Activated T-helper 2 cell treated with anti-CD3 and anti-CD28 coated beads, Interferon-gamma antibody, Interleukin-2, Interleukin-4, amounts not matched to agents 10 μg/mL and 5 μg/mL and 100 μg/mL, durations not matched to agents 14 hours and 24 hours and 36 hours (primary cell): ENCODE measurements at regions of chr16 and their contacts with region 1.

Region 1: DNA sequence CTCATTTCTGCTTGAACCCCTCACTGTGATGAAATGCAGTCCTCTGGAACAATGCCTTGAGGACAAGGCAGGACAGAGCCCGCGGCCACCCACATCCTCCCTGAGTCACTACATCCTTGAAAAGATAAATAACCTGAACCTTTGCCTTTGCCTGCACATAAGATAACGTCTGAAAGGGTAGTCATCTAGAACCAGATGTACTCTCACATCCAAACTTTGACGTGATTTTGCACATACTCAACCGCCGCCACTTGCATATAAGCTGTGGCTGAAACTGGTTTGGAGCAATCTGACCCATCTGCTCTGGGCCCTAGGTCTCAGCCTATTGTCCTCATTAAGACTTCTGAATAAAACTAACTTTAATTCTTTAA is 252.1 kb downstream of the PHKB start:
- DNase-seq: peak; percentile 37
- H3K4me3 Mint-ChIP-seq: no peak overlapping the region
- H3K27ac Mint-ChIP-seq: peak overlapping the region; percentile 24
- H3K4me1 Mint-ChIP-seq: peaks cover 30% of the 10 kb centered on the region
- H3K27me3 Mint-ChIP-seq: peaks cover 31% of the 10 kb centered on the region

Region 2: GRCh38 chr16:47110939-47111338 is 602.3 kb before region 1 on chr16:
- intact Hi-C with region 1: loop called (anchors 10 kb)
- DNase-seq: no peak
- H3K4me3 Mint-ChIP-seq: no peak overlapping the region
- H3K27ac Mint-ChIP-seq: no peak overlapping the region
- H3K4me1 Mint-ChIP-seq: peaks cover 11% of the 10 kb centered on the region
- H3K27me3 Mint-ChIP-seq: peaks cover 30% of the 10 kb centered on the region

Region 3: GRCh38 chr16:47229053-47230050 is 483.9 kb before region 1 on chr16:
- intact Hi-C with region 1: loop called (anchors 5 kb)
- DNase-seq: no peak
- H3K4me3 Mint-ChIP-seq: no peak overlapping the region
- H3K27ac Mint-ChIP-seq: peak overlapping the region; percentile 15
- H3K4me1 Mint-ChIP-seq: peaks cover 17% of the 10 kb centered on the region
- H3K27me3 Mint-ChIP-seq: no peaks in the 10 kb centered on the region

Region 4: GRCh38 chr16:47574091-47575054 is 138.8 kb before region 1 on chr16:
- intact Hi-C with region 1: loop called (anchors 10 kb)
- DNase-seq: no peak
- H3K4me3 Mint-ChIP-seq: no peak overlapping the region
- H3K27ac Mint-ChIP-seq: peak overlapping the region; percentile 60
- H3K4me1 Mint-ChIP-seq: peaks cover 19% of the 10 kb centered on the region
- H3K27me3 Mint-ChIP-seq: no peaks in the 10 kb centered on the region

Region 5: DNA sequence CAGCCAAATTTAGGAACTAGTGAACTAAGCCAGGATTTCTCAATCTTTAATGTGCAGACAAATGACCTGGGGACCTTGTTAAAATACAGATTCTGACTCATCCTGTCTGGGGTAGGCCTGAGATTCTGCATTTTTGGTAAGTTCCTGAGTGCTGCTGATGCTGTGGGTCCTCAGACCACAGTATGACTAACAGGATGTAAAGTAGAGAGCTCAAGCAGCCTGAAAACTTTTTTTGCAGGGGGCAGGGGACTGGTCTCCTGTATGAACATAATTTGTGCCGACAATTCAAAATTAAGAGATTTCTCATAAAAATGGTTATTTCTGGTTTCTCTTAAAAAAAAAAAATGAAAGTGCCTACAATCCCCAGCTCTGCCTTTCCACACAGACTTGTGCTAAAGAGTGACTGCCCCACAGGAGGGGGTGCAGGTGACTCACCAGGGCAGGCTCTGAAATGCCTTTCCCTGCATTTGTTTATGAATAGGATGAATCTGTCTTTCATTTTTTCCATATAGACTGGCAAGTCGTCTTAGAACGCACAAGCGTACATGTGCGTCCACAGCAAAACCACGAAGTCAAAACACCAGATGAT is 19.4 kb after region 1 on chr16:
- intact Hi-C with region 1: loop called (anchors 1 kb)
- DNase-seq: no peak
- H3K4me3 Mint-ChIP-seq: no peak overlapping the region
- H3K27ac Mint-ChIP-seq: peak overlapping the region; percentile 62
- H3K4me1 Mint-ChIP-seq: peaks cover 13% of the 10 kb centered on the region
- H3K27me3 Mint-ChIP-seq: peaks cover 14% of the 10 kb centered on the region

Region 6: GRCh38 chr16:47887496-47887895 is 174.3 kb after region 1 on chr16:
- intact Hi-C with region 1: no loop called
- DNase-seq: no peak
- H3K4me3 Mint-ChIP-seq: no peak overlapping the region
- H3K27ac Mint-ChIP-seq: no peak overlapping the region
- H3K4me1 Mint-ChIP-seq: no peaks in the 10 kb centered on the region
- H3K27me3 Mint-ChIP-seq: peaks cover 12% of the 10 kb centered on the region

Region 7: DNA sequence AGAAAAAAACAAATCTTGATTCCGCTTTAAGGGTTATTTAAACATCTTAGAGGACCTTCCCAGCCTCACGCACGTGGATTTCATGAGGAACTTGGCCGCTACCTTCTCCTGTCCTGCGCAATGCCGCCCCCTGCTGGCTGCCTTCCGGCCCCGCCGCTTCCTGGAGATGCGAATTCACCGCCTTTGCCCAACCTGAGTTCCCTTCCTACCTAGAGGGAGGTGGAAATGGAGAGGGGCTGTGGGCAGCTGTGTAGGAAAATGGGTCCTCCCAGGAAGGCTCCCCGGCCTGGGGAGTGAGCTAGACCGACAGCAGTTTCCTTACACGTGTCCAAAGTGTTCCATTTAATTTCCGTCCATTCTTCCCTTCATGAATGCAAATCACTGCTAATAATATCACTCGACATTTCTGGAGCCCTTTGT is 443.6 kb after region 1 on chr16:
- intact Hi-C with region 1: loop called (anchors 2 kb)
- DNase-seq: peak; percentile 60
- H3K4me3 Mint-ChIP-seq: no peak overlapping the region
- H3K27ac Mint-ChIP-seq: no peak overlapping the region
- H3K4me1 Mint-ChIP-seq: peaks cover 25% of the 10 kb centered on the region
- H3K27me3 Mint-ChIP-seq: peaks cover 38% of the 10 kb centered on the region